IMR-90 (cell line): ENCODE measurements at regions of chr6 and their contacts with region 1.

Region 1: DNA sequence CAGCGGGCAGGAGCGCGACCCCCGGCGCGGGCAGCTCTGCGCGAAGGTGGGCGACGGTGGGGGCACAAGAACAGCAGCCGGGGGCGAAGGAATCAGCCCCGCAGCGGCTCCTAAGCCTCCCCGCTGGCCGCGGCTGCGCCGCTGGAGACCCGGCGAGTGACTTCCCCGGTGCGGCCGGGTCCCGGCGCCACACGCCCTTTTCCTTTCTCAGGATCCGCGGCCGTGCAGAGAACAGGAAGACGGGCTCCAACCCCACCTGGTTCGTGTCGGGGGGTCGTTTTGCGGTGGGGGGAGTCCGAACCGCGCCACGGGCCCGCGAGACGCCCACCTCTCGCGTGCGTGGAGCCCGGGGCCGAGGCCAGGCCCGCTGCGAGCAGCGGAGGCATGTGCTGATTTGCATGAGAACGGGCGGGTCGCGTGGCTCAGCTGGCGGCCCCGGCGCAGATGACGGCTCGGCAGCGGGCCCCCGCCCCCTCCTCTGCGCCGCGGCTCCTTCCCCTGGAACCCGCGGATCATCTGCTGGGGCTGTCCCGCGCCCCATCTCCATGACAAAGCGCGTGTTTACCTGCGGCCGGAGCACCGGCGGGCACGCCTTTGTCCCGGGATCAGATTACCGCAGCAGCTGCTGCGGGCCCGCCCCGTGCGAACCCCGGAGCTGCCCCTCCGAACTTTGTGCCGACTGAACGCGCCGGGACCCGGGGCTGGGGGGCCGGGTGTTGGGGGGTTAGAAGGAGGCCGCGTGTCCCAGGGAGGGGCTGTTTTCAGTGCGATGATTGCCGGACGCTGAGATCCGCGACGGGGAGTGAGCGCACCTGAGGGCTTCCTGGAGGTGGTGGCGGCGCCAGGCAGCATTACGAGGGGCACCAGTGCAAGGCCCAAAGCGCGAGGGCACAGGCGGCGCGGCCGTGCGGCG is 4.9 kb upstream of the DLL1 start:
- DNase-seq: no peak
- ATAC-seq: peak; percentile 33
- H3K4me3 ChIP-seq: peak overlapping the region; percentile 49
- H3K27ac ChIP-seq: no peak overlapping the region
- H3K4me1 ChIP-seq: peaks cover 4% of the 10 kb centered on the region; the same call in 1 of the 2 replicates
- H3K27me3 ChIP-seq: peaks cover 78% of the 10 kb centered on the region
- CTCF ChIP-seq: no peak
- POLR2A ChIP-seq: no peak
- RAD21 ChIP-seq: no peak

Region 2: DNA sequence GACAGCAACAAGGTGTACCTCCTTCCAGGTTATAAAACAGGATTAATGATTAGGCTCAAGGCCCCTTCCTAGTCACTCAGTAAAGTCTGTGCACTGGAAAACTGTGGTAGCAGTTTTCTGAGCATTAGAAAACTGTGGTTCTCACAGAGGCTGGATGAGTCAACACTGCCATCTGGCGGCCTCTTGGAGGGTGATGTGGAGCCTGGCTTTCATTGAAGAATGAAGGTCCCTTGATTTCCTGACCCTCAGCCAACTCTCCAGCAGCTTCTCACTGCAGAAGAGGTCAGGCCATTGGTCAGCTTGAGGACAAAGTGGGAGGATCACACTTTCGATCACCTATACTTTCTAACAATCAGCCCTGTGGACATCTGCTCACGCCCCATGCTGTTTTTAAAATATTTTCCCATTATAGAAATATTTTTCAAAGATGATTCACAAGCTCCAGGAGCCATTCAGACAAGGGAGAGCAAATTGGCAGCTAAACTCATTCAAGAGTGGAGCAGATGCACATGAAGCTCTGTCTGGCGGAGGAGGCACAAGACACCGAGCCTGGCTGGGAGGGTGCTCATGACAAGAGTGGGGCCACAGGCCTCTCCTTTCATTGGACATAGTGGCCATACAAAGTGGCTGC is 234.2 kb after region 1 on chr6:
- CTCF ChIA-PET with region 1: no interaction called
- POLR2A ChIA-PET with region 1: no interaction called
- dilution Hi-C with region 1: no loop called
- in situ Hi-C with region 1: no loop called
- intact Hi-C with region 1: loop called (anchors 5 kb)
- DNase-seq: peak; percentile 69
- ATAC-seq: peak; percentile 88
- H3K4me3 ChIP-seq: no peak overlapping the region
- H3K27ac ChIP-seq: no peak overlapping the region
- H3K4me1 ChIP-seq: peaks cover 6% of the 10 kb centered on the region
- H3K27me3 ChIP-seq: no peaks in the 10 kb centered on the region
- CTCF ChIP-seq: peak; percentile 92
- POLR2A ChIP-seq: no peak
- RAD21 ChIP-seq: peak; percentile 95